Psoas muscle (tissue), 8 donors: ENCODE measurements at regions of chr19 and their contacts with region 1.

Region 1: DNA sequence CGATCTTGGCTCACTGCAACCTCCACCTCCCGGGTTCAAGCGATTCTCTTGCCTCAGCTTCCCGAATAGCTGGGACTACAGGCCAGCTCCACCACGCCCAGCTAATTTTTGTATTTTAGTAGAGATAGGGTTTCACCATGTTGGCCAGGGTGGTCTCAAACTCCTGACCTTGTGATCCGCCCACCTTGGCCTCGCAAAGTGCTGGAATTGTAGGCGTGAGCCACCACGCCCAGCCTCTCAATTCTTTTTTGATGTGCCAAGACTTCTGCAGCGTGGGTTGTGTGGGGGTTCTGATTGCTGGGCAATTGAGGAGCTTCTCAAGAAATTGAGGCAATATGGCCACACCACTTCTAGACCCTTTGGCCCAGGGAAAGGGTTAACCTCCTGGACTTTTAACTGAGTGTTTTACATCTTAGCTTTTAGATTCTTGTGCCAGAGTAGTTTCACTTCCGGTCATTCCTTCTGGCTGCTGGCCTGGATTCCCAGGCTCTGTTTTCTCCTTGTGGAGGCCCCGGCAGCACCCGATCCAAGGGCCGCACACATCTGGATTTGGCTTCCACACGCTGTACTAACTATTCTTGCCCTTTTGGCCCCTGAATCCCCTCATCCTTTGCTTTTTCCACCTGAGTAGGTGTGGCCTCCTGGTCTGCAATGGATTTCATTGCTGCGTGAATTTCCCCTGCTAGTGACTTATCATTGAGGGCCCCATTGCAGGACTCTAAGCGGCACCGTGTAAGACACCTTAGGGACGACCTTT is 14.7 kb downstream of the SMARCA4 start:
- DNase-seq: peak; percentile 60 to 82
- ATAC-seq: peak; percentile 5 to 54 (median 40)
- H3K4me3 ChIP-seq: peak overlapping the region; percentile 13
- H3K27ac ChIP-seq: peak overlapping the region; percentile 59
- H3K4me1 ChIP-seq: peaks cover 25% of the 10 kb centered on the region
- H3K27me3 ChIP-seq: no peaks in the 10 kb centered on the region
- CTCF ChIP-seq: no peak

Region 2: DNA sequence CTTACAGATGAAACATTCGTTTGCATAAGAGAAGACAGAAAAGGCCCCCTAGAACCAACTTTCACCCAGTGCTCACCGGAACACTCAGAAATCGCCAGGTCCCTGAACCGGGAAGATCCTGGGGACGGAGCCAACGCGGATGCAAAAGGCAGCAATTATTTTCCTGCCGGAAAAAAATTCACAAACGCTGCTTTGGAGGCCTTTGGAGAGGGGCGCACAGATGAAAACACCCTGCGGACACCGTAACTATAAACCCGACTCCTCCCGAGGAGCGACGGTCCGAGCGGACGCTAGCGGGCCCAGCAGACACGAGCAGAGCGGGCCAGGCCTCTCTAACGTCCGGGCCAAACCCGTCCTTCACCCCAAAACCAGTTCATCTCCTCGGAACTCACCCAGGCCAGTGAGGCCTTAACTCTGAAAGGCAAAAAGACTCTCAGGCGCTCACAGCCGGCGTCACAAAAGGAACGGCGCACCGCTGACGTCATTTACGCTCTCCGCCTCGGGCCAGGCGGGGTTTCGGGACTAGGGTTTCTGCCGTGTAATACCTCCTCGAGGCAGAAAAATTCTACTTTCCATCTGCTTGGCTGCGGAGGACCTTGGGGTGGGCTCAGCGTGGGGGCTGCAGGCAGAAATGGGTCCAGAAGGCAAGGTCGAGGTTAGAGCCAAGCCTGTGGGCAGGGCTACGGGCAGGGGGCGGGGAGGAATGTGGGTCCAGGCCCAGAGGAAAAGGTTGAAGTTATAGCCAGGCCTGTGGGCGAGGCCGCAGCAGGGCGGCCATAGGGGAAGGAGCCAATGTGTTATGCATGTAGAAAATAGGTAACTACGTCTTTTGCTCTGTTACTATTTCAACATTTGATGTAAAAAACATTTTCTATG is 1437.1 kb before region 1 on chr19 and contains the start of gene ZNF426:
- intact Hi-C with region 1: loop called in 1 of 2 experiments (anchors 5 kb)
- DNase-seq: peak; percentile 87 to 92
- ATAC-seq: peak; percentile 95 to 99 (median 97)
- H3K4me3 ChIP-seq: peak within 1 kb of the TSS; percentile 91
- H3K27ac ChIP-seq: peak within 1 kb of the TSS; percentile 87
- H3K4me1 ChIP-seq: peaks cover 12% of the 10 kb centered on the region
- H3K27me3 ChIP-seq: no peaks in the 10 kb centered on the region
- CTCF ChIP-seq: no peak
- total RNA-seq, gene ZNF426: 5.2 to 12.3 (median 7.4) TPM

Region 3: DNA sequence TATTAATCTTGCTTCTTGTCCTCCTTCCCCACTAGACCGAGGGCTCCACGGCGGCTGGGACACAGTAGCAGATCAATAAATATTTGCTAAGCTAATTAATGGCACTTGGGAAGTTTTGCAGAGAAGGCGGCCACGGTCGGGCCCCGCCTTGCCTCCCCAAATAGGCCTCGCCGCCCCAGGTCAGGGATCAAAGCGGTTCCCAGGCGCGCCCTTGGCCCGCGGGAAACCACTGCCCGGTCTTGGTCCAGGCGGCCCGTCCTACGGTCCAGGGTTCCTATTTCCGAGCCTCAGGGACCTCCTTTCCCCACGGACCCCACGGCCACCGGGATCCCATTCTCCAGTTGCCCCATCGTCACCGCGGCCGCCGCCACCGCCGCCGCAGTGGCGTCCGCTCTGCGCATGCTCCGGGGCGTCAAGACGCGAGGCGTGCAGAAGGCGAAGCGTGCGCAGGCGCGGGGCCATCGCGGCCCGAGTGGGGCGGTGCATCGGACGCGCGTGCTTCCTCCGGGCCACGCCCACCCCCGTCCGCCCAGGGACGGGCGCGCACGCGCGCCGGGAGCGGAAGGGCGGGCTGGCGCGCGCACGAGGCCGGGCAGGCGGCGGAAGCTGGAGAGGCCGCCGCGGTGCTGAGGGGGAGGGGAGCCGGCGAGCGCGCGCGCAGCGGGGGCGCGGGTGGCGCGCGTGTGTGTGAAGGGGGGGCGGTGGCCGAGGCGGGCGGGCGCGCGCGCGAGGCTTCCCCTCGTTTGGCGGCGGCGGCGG is 15.1 kb before region 1 on chr19 and contains the start of gene SMARCA4:
- intact Hi-C with region 1: loop called in 1 of 2 experiments (anchors 2 kb)
- DNase-seq: peak; percentile 99
- ATAC-seq: peak; percentile 96 to 97 (median 97)
- H3K4me3 ChIP-seq: peak within 1 kb of the TSS; percentile 71
- H3K27ac ChIP-seq: peak within 1 kb of the TSS; percentile 95
- H3K4me1 ChIP-seq: peaks cover 27% of the 10 kb centered on the region
- H3K27me3 ChIP-seq: no peaks in the 10 kb centered on the region
- CTCF ChIP-seq: no peak
- total RNA-seq, gene SMARCA4: 34.8 to 75.6 (median 50.5) TPM